ENCODE measurements at regions of chr16 and their contacts with region 1.

Region 1: GRCh38 chr16:72206299-72206698 is 34.3 kb upstream of the PMFBP1 start:
- DNase-seq: no peak
- H3K4me3 ChIP-seq: no peak overlapping the region
- CTCF ChIP-seq: no peak
- POLR2A ChIP-seq: no peak

Region 2: DNA sequence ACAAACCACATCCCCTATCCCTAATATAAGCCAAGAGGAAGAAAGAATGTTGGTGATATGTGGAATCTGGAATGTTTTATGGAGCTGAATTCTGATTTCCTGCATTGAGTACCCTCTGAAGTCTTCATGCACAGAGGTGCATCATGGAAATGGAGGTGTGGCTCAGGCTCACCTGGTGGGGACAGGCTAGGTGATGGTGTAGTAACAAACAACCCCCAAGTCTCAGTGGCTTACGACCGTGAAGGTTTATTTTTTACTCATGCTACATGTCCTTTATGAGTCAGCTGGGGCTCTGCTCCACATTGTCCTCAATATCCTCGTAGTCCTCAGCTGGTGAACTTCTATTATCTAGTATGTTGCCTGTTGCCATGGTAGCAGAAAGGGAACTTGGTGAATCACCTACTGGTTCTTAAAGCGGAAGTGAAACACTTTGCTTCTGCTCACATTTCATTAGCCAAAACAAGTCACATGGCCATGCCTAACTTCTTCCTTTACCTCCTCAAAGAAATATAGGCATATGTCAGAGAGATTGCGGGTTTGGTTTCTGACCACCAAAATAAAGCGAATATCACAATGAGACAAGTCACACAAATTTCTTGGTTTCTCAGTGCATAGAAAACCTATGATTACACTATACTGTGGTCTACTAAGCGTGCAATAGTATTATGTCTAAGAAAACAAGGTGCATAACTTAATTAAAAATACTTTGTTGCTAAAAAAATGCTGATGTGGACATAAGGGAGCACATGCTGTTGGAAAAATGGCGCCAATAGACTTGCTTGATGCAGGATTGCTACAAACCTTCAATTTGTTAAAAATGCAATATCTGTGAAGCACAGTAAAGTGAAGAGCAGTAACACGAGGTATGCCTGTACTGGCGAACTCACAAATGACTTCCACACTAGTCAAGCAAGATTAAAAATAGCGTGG is 33.9 kb before region 1 on chr16 and contains the start of gene PMFBP1:
- intact Hi-C with region 1: loop called (anchors 2 kb)
- DNase-seq: peak in 1 of 2 donors; percentile 57
- H3K4me3 ChIP-seq: no peak within 1 kb of the TSS
- CTCF ChIP-seq: no peak
- POLR2A ChIP-seq: no peak
- total RNA-seq, gene PMFBP1: 0.17 to 2.9 (median 1.0) TPM